Esophagus muscularis mucosa (tissue), 4 donors: ENCODE measurements at regions of chr22 and their contacts with region 1.

Region 1: DNA sequence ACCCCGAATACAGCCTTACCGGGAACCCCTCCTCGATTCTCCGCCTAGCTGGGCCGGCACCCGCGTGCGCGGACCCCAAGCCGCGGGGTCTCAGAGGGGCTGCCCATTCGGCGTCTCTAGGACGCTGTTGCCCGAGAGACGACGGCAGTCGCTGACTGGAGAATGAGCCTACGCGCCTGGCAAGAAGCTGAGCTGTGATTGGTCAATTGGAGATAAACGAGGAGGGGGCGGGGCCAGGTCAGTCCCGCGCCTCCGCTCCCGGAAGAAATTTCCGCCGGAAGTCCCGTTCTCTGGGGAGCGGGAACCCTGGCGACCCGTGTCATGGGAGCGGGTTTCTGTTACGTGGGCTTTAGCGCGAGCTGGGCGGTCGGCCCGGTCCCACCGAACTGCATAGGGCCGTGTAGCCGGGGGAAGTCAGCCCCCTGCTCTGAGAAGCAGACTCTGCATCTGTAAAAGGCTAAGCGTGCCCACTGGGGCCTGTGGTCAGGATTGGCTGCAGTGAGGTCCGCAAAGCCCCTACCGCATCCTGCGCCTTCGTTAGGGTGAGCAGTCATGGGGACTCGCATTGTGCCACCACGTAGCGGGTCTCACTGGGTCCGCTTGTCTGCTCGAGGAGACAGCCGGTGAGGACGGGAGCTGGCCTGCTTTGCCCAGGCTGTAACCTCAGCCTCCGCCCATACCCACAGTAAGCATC is at the start of gene EFCAB6:
- DNase-seq: peak; percentile 98
- H3K4me3 ChIP-seq: peak within 1 kb of the TSS; percentile 78 to 95 (median 89)
- H3K27ac ChIP-seq: peak within 1 kb of the TSS; percentile 72 to 88 (median 78)
- H3K4me1 ChIP-seq: peaks cover 14 to 23% (median 19%) of the 10 kb centered on the region in 4 donors
- H3K27me3 ChIP-seq: no peaks in the 10 kb centered on the region
- CTCF ChIP-seq: no peak
- EP300 ChIP-seq: no peak
- POLR2A ChIP-seq: peak; percentile 53
- total RNA-seq, gene EFCAB6: 1.2 to 4.0 (median 3.0) TPM

Region 2: DNA sequence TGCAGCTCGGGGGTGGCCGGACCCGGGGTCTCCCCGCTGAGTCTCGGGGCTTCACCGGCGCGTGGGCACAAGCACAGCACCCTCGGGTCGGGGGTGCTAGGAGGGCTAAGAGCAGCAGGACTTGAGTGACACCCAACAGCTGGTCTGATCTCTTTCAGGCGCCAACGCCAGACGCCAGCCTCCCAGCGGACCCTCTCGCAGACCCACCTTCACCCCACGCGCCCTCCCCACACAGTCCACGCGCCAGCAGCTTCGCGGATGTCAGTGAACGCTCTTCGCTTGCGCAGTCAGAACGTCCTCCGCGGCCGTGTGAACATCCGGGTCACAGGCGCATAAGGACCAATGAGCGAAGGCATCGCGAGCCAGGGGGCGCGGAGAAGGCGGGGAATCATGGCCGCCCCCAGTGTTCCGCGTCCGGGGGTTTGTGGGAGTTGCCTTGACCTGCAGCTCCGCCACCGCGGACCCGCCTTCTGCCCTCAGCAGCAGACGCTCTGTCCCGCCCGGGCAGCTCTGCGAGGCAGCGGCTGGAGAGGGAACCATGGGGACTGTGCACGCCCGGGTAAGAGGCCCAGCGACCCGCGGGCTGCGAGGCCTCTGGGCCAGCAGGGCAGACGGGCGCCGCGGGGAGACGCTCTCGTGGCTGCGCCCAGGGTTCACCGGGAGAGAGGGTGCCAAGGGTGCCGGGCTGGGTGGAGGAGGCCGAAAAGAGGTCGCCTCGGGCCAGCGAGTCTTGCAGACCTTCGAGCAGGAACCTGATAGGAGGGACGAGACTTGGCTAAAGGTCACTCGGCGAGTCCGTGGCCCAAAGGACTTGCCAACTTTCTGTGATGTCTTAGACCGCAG is 143.0 kb after region 1 on chr22 and contains the start of gene SAMM50:
- intact Hi-C with region 1: loop called (anchors 10 kb)
- DNase-seq: peak; percentile 98
- H3K4me3 ChIP-seq: peak within 1 kb of the TSS; percentile 60 to 99 (median 84)
- H3K27ac ChIP-seq: peak within 1 kb of the TSS; percentile 79 to 89 (median 85)
- H3K4me1 ChIP-seq: peaks cover 27 to 38% (median 36%) of the 10 kb centered on the region in 4 donors
- H3K27me3 ChIP-seq: peaks cover 0 to 14% (median 0%) of the 10 kb centered on the region in 4 donors
- CTCF ChIP-seq: peak in 2 of 3 experiments; percentile 7 to 14
- EP300 ChIP-seq: no peak
- POLR2A ChIP-seq: no peak
- total RNA-seq, gene SAMM50: 21.6 to 28.6 (median 27.2) TPM

Region 3: DNA sequence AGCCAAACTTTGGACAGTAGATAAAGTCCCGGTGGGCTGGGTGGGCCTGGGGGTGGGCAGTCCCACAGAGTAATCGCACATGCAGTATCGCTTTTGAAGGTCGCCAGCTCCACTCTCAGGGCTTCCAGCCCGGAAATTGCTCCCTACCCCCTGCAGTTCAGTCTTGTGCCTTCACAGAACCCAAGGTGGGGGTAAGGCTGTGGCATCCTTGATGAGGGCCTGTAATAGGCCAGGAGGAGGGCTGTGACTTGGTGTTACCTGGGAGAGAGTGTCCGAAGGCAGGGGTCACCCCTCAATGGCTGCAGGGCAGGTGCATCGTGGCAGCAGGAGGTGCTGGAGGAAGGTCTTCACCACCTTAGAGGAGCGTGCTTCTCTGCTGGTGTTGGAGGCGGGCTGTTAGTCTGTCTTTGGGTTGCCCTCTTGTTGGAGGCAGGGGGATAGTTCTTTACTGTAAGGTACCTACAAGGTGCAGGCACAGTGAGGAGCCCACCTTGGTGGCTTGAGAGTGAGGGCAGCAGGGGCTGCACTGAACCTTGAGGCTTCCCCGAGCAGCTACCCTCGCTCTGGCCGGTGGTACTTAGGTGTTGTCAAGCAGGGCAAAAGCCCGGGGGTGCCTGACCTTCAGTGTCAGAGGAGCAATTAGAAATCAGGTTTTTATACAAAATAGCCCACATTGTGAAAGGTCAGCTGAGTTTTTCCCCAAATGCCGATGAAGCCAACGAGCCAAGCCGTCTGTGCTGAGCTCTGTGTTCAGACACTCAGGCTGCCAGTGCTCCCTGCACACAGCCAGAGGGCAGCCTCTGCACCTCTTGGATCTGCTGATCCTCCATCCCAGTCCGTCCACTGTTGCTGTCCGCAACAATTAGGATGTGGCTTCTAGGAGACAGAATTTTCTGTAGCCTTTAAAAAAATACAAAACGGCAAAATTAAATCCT is 164.8 kb after region 1 on chr22:
- intact Hi-C with region 1: no loop called
- DNase-seq: no peak
- H3K4me3 ChIP-seq: no peak overlapping the region
- H3K27ac ChIP-seq: no peak overlapping the region
- H3K4me1 ChIP-seq: no peaks in the 10 kb centered on the region
- H3K27me3 ChIP-seq: no peaks in the 10 kb centered on the region
- CTCF ChIP-seq: no peak
- EP300 ChIP-seq: no peak
- POLR2A ChIP-seq: no peak